ENCODE measurements at regions of chr4 and their contacts with region 1.

Region 1: DNA sequence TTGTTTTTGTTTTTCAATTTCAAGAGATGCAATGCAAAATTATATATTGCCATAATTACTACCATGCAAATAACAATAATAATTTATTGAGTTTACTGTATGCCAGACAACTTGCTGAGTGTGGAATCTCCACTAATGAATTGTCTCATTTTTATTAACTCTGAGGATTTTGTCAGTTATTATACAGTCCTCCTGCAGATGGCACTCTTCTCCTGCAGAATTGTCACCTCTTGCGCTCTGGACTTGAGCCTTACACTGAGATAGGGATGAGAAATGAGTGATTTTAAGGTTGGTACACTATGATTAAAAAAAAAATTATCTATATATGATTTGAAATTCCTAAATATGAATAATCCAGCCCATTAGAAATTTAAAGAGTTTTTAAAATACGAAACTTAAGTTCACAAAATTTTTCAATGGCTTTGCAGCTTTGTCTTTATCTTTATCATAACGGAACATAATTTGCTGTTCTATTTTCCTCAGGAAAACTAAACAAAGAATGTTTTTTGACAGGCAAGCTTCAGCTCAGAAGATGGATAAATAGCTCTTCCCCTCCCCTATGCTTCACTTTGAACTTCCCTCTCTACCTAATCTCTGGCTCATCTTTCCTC is 12.7 kb upstream of the PAQR3 start:
- DNase-seq: peak in 1 of 6 donors; percentile 28
- ATAC-seq: peak in 3 of 4 donors; percentile 84 to 92 (median 88)
- H3K4me3 ChIP-seq: no peak overlapping the region
- H3K27ac ChIP-seq: no peak overlapping the region
- H3K4me1 ChIP-seq: no peaks in the 10 kb centered on the region
- H3K27me3 ChIP-seq: no peaks in the 10 kb centered on the region
- CTCF ChIP-seq: peak; percentile 12 to 60 (median 52)

Region 2: GRCh38 chr4:78784236-78784865 is 167.6 kb before region 1 on chr4:
- intact Hi-C with region 1: no loop called
- DNase-seq: no peak
- ATAC-seq: peak in 2 of 4 donors; percentile 23 to 25
- H3K4me3 ChIP-seq: no peak overlapping the region
- H3K27ac ChIP-seq: no peak overlapping the region
- H3K4me1 ChIP-seq: peaks cover 0 to 7% (median 6%) of the 10 kb centered on the region in 3 donors
- H3K27me3 ChIP-seq: no peaks in the 10 kb centered on the region
- CTCF ChIP-seq: no peak

Region 3: DNA sequence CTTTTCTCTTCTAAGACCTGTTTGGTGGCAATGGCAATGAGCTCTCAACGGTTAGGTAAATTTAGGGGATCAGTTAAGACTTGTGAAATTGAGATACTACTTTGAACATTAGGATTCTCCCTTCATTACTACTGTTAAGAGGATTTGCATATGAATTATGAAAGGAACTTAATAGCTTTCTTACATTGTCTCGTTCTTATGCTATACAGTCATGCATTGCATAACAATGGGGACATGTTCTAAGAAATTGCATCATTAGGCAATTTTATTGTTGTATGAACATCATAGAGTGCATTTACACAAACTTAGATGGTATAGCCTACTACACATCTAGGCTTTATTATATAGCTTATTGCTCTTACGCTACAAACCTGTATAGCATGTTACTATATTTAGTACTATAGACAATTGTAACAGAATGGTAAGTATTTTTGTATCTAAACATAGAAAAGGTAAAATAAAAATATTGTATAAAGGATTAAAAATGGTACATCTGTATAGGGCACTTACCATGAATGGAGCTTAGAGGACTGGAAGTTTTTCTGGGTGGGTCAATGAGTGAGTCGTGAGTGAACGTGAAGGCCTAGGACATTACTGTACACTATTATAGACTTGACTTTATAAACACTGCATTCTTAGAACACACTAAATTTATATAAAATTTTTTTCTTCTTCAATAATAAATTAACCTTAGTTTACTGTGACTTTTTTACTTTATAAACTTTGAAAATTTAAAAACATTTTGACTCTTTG is 75.2 kb before region 1 on chr4:
- intact Hi-C with region 1: no loop called
- DNase-seq: no peak
- ATAC-seq: no peak
- H3K4me3 ChIP-seq: no peak overlapping the region
- H3K27ac ChIP-seq: no peak overlapping the region
- H3K4me1 ChIP-seq: no peaks in the 10 kb centered on the region
- H3K27me3 ChIP-seq: no peaks in the 10 kb centered on the region
- CTCF ChIP-seq: no peak

Region 4: DNA sequence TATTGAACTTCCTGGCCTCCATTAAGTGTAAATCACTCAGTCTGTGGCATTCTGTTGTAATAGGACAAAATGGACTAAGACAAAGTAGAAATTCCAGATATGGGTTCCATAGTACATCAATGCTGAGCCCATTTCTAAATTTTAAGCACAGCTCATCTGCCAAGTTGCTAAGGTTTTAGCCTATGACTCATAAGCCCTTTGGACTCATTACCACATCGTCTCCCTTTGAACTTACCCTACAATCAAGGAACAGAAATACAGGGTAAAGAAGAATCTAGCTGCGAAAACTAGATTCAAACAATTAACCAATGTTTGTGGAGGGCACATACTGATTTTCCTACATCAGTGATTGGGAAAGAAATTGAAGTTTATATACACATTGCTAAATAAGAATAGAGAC is 342.1 kb after region 1 on chr4:
- intact Hi-C with region 1: no loop called
- DNase-seq: no peak
- ATAC-seq: no peak
- H3K4me3 ChIP-seq: no peak overlapping the region
- H3K27ac ChIP-seq: no peak overlapping the region
- H3K4me1 ChIP-seq: no peaks in the 10 kb centered on the region
- H3K27me3 ChIP-seq: no peaks in the 10 kb centered on the region
- CTCF ChIP-seq: no peak

Region 5: DNA sequence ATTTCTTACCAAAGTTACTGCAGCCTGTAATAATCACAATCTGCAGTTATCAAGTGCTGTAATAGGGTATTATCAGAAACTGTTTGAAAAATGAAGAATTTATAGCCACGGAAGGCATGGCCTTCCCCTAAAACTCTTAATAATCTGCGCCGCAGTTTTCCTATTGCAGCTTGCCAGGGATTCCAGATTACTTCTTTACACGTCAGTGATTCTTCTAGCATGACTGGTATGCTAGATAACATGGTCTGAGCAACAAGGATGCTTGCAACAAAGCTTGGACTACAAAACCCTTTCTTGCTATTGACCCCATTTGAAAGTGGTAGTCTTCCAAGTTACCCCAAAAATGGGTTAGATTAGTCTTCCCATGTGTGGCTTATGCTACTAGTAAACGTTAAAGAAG is 503.2 kb after region 1 on chr4:
- intact Hi-C with region 1: no loop called
- DNase-seq: no peak
- ATAC-seq: no peak
- H3K4me3 ChIP-seq: no peak overlapping the region
- H3K27ac ChIP-seq: no peak overlapping the region
- H3K4me1 ChIP-seq: no peaks in the 10 kb centered on the region
- H3K27me3 ChIP-seq: peaks cover 0 to 4% (median 0%) of the 10 kb centered on the region in 4 donors
- CTCF ChIP-seq: no peak

Region 6: DNA sequence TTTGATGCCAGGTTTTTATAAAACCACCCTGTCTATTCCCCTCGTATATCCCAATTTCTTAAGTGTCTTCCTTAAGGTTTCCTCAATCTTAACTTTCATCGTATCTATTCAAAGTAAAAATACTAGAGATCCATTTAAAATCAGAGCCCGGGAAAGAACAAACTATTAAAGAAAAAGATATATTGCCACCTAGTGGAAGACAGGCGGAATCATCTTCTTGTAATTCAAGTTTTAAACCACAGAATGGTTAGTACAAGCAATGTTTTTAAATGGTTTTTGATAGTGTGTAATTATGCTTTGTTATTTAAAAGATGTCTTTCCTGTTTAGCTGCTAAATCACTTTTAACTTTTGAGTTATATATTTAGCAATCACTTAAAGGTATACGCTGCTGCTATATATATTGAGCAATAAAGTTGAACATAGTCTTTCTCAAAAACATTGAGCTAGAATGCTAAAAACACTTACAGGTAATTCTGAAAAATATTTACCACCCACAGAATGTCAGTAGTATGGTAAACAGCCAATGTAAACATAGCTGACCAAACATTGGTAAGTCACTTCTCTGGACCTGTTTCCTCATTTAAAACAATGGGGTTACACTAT is 1263.6 kb after region 1 on chr4:
- intact Hi-C with region 1: loop called (anchors 5 to 10 kb)
- DNase-seq: no peak
- ATAC-seq: peak in 3 of 4 donors; percentile 60 to 76 (median 67)
- H3K4me3 ChIP-seq: no peak overlapping the region
- H3K27ac ChIP-seq: no peak overlapping the region
- H3K4me1 ChIP-seq: no peaks in the 10 kb centered on the region
- H3K27me3 ChIP-seq: peaks cover 0 to 16% (median 2%) of the 10 kb centered on the region in 4 donors
- CTCF ChIP-seq: peak; percentile 33 to 63 (median 52)

Measured in pancreas (tissue), 10 donors.